ENCODE measurements at regions of chr17 and their contacts with region 1.

Region 1: DNA sequence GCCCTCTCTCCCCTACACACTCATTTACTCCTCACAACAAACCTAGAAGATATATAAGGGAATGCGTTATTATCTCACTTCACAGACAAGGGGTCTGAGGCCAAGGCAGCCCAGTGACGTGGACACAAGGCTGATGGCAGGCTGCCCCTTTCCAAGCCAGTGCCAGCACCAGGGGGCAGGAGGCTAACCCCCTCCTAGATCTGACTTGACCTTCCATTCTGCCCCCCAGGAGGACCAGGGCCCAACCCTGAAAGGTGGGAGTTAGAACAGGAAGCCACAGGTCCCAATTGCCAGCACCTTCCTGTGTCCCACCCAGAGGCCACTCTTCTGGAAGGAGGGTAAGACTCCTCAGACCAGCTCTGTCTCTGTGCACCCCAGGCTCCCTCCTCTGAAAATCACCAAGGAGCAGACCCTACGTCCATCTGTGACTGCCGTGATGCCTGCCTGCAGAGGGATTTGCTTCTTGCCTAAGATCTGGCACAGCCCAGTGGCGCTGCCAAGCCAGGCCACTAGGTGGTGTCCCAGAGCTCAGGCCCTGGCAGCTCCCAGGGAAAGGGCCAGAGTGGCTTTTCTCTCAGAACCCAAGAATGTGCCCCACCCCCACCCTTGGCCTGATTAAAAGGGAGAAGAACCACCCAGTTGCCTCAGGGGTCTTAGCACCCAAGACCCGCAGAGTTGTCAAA is 42.4 kb upstream of the MRPS23 start:
- DNase-seq: peak; percentile 86
- H3K4me3 Mint-ChIP-seq: no peak overlapping the region
- H3K27ac Mint-ChIP-seq: no peak overlapping the region
- H3K4me1 Mint-ChIP-seq: no peaks in the 10 kb centered on the region
- H3K27me3 Mint-ChIP-seq: peaks cover 2% of the 10 kb centered on the region

Region 2: GRCh38 chr17:57879463-57880433 is 12.5 kb before region 1 on chr17:
- CTCF ChIA-PET with region 1: interaction called, 15 read pairs
- POLR2A ChIA-PET with region 1: no interaction called
- intact Hi-C with region 1: no loop called
- DNase-seq: peak; percentile 57
- H3K4me3 Mint-ChIP-seq: no peak overlapping the region
- H3K27ac Mint-ChIP-seq: peak overlapping the region; percentile 35
- H3K4me1 Mint-ChIP-seq: peaks cover 31% of the 10 kb centered on the region
- H3K27me3 Mint-ChIP-seq: peaks cover 13% of the 10 kb centered on the region

Region 3: GRCh38 chr17:57916925-57917858 is 24.9 kb after region 1 on chr17:
- CTCF ChIA-PET with region 1: no interaction called
- POLR2A ChIA-PET with region 1: no interaction called
- intact Hi-C with region 1: no loop called
- DNase-seq: peak; percentile 36
- H3K4me3 Mint-ChIP-seq: no peak overlapping the region
- H3K27ac Mint-ChIP-seq: no peak overlapping the region
- H3K4me1 Mint-ChIP-seq: no peaks in the 10 kb centered on the region
- H3K27me3 Mint-ChIP-seq: peaks cover 2% of the 10 kb centered on the region

Region 4: GRCh38 chr17:57946798-57947358 is 54.6 kb after region 1 on chr17:
- CTCF ChIA-PET with region 1: interaction called, 24 read pairs
- POLR2A ChIA-PET with region 1: no interaction called
- intact Hi-C with region 1: no loop called
- DNase-seq: peak; percentile 56
- H3K4me3 Mint-ChIP-seq: peak overlapping the region; percentile 33
- H3K27ac Mint-ChIP-seq: no peak overlapping the region
- H3K4me1 Mint-ChIP-seq: peaks cover 34% of the 10 kb centered on the region
- H3K27me3 Mint-ChIP-seq: peaks cover 9% of the 10 kb centered on the region

Region 5: GRCh38 chr17:57987580-57988421 is 95.5 kb after region 1 on chr17 and contains the start of gene VEZF1:
- CTCF ChIA-PET with region 1: interaction called, 14 read pairs
- POLR2A ChIA-PET with region 1: no interaction called
- intact Hi-C with region 1: no loop called
- DNase-seq: peak; percentile 82
- H3K4me3 Mint-ChIP-seq: peak within 1 kb of the TSS; percentile 89
- H3K27ac Mint-ChIP-seq: peak within 1 kb of the TSS; percentile 87
- H3K4me1 Mint-ChIP-seq: peaks cover 56% of the 10 kb centered on the region
- H3K27me3 Mint-ChIP-seq: no peaks in the 10 kb centered on the region
- total RNA-seq, gene VEZF1: 26.8 to 29.8 TPM

Region 6: DNA sequence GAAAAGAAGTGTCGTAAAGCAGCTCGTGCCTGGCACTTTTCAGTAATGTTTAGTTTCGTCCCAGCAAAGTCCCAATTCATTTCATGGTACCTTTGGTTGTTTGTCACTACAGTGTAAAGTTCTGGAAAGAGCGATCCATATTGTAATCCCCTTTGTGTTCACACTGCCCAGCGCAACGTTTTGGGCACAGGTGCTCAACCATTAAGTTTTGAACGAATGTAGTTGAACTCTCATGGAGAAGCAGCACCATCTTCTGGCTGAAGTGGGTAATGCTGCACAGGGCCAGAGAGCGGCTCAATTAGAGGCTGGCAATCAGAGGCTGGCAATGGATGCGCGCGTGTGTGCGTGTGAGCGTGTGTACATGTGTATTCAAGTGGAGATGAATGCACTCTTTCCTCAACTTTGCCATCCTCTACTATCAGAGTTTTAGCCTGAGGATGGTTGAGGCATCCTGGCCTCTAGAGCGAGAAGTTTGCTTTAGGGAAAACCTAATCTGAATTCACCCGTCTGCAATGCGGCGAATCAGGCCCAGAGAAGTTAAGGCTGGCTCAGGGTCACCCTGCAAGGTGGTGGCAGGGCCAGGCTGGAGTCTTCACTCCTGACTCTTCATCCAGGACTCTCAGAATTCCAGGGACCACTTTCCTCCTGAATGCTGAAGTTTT is 220.8 kb after region 1 on chr17:
- CTCF ChIA-PET with region 1: interaction called, 35 read pairs
- POLR2A ChIA-PET with region 1: no interaction called
- intact Hi-C with region 1: no loop called
- DNase-seq: peak; percentile 89
- H3K4me3 Mint-ChIP-seq: no peak overlapping the region
- H3K27ac Mint-ChIP-seq: no peak overlapping the region
- H3K4me1 Mint-ChIP-seq: peaks cover 4% of the 10 kb centered on the region
- H3K27me3 Mint-ChIP-seq: peaks cover 2% of the 10 kb centered on the region

Measured in activated CD4-positive, alpha-beta memory T cell treated with anti-CD3 and anti-CD28 coated beads for 36 hours (primary cell).